Activated naive CD4-positive, alpha-beta T cell treated with anti-CD3 and anti-CD28 coated beads for 36 hours (primary cell): ENCODE measurements at regions of chr9 and their contacts with region 1.

Region 1: DNA sequence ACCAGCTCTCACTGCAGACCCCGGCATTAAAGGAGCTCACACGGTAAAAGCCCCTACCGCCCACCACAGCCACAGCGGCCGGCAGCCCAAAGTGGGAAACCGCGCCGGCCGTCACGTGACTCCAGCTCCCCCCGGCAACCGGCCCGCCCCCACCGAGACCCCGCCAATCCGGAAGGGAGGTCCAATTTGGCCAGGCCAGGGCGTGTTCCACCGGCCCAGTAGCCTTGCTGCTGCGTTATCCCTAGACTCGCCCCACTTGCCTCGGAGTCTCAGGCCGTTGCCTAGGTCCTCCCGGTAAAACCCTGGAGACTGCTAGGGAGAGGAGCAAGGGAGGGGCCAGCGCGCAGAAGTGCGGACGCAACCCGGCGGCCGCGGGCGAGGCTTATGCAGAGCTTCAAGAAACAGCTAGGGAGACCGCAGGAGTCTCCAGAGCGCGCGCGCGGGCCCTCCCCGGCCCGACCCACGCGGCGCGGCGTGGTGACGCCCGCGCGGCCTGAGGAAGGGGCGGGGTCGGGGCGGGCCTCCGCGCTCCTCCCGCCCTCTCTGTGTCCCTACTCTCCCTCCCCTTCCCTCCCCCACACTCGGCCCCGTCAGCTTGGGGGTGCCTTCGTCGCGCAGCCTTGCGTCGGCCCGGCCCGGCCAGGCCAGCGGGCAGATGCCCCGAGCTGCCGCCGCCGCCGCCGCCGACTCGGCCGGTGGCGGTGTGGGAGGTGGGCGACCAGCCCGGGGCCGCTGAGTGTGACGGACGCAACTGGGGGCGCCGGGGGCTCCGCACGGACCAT is at the start of gene RIC1:
- DNase-seq: peak; percentile 90
- H3K4me3 Mint-ChIP-seq: peak within 1 kb of the TSS; percentile 99
- H3K27ac Mint-ChIP-seq: peak within 1 kb of the TSS; percentile 100
- H3K4me1 Mint-ChIP-seq: peaks cover 59% of the 10 kb centered on the region
- H3K27me3 Mint-ChIP-seq: no peaks in the 10 kb centered on the region
- total RNA-seq, gene RIC1: 14.5 to 16.4 TPM

Region 2: GRCh38 chr9:4792572-4793458 is 835.9 kb before region 1 on chr9 and contains the start of gene RCL1:
- CTCF ChIA-PET with region 1: no interaction called
- intact Hi-C with region 1: loop called (anchors 2 kb)
- DNase-seq: peak; percentile 97
- H3K4me3 Mint-ChIP-seq: peak within 1 kb of the TSS; percentile 96
- H3K27ac Mint-ChIP-seq: peak within 1 kb of the TSS; percentile 84
- H3K4me1 Mint-ChIP-seq: peaks cover 49% of the 10 kb centered on the region
- H3K27me3 Mint-ChIP-seq: no peaks in the 10 kb centered on the region
- total RNA-seq, gene RCL1: 26.9 to 30.7 TPM

Region 3: GRCh38 chr9:5450359-5451091 is 178.2 kb before region 1 on chr9 and contains the start of gene CD274:
- CTCF ChIA-PET with region 1: interaction called, 6 read pairs
- intact Hi-C with region 1: loop called (anchors 1 kb)
- DNase-seq: peak; percentile 83
- H3K4me3 Mint-ChIP-seq: peak within 1 kb of the TSS; percentile 89
- H3K27ac Mint-ChIP-seq: peak within 1 kb of the TSS; percentile 92
- H3K4me1 Mint-ChIP-seq: peaks cover 65% of the 10 kb centered on the region
- H3K27me3 Mint-ChIP-seq: no peaks in the 10 kb centered on the region
- total RNA-seq, gene CD274: 14.2 to 15.0 TPM

Region 4: GRCh38 chr9:5492965-5493678 is 135.6 kb before region 1 on chr9:
- CTCF ChIA-PET with region 1: no interaction called
- intact Hi-C with region 1: no loop called
- DNase-seq: no peak
- H3K4me3 Mint-ChIP-seq: no peak overlapping the region
- H3K27ac Mint-ChIP-seq: no peak overlapping the region
- H3K4me1 Mint-ChIP-seq: peaks cover 17% of the 10 kb centered on the region
- H3K27me3 Mint-ChIP-seq: no peaks in the 10 kb centered on the region

Region 5: GRCh38 chr9:5644501-5644900 is 15.8 kb after region 1 on chr9:
- CTCF ChIA-PET with region 1: no interaction called
- intact Hi-C with region 1: loop called (anchors 1 kb)
- DNase-seq: no peak
- H3K4me3 Mint-ChIP-seq: no peak overlapping the region
- H3K27ac Mint-ChIP-seq: no peak overlapping the region
- H3K4me1 Mint-ChIP-seq: peaks cover 43% of the 10 kb centered on the region
- H3K27me3 Mint-ChIP-seq: no peaks in the 10 kb centered on the region

Region 6: GRCh38 chr9:5909976-5910375 is 281.3 kb after region 1 on chr9:
- CTCF ChIA-PET with region 1: no interaction called
- intact Hi-C with region 1: loop called (anchors 1 kb)
- DNase-seq: no peak
- H3K4me3 Mint-ChIP-seq: peak overlapping the region; percentile 32
- H3K27ac Mint-ChIP-seq: peak overlapping the region; percentile 89
- H3K4me1 Mint-ChIP-seq: peaks cover 29% of the 10 kb centered on the region
- H3K27me3 Mint-ChIP-seq: no peaks in the 10 kb centered on the region

Region 7: DNA sequence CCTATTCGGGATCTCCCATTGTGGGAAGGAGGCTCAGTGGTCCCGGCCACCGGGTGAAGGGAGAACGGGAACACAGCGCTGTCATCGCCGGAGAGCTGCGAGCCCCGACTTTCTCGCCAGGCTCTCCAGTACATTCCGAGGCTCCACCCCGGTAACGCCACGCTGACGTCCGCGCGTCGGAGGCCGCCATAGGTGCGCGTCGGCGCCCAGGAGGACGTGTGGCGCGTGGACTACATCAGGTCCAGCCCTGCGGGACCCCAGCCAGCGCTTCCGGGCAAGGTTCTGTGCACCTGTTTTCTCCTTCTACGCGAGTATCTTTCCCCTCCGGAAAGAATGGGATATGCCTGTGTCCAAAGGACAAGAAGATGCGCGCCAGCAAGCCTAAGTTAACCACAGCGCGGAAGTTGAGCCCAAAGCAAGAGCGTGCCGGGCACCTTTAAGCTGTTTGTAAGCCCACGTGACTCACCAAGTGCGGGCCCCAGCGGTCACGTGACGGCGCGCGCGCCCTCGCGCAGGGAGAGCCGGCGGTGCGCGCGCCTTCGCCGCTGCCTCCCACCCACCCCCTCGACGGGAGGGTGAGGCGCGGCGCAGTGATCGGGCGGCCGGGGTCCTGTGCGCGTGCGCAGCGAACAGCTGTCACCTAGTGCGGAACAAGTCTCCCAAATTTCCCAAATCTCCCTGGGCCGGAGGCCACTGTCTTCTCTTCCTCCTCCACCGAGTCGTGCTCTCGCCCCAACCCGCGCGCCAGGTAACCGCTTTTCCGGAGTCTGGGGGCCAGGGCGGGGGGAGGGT is 1128.9 kb after region 1 on chr9 and contains the start of gene KDM4C:
- CTCF ChIA-PET with region 1: no interaction called
- intact Hi-C with region 1: loop called (anchors 5 kb)
- DNase-seq: peak; percentile 93
- H3K4me3 Mint-ChIP-seq: peak within 1 kb of the TSS; percentile 86
- H3K27ac Mint-ChIP-seq: peak within 1 kb of the TSS; percentile 99
- H3K4me1 Mint-ChIP-seq: peaks cover 25% of the 10 kb centered on the region
- H3K27me3 Mint-ChIP-seq: no peaks in the 10 kb centered on the region
- total RNA-seq, gene KDM4C: 27.4 to 28.9 TPM